PC-3 (cell line): ENCODE measurements at regions of chr2 and their contacts with region 1.

Region 1: GRCh38 chr2:118148809-118149208 is 60.5 kb downstream of the INSIG2 start:
- DNase-seq: no peak
- ATAC-seq: no peak
- H3K4me3 ChIP-seq: no peak overlapping the region
- H3K27ac ChIP-seq: no peak overlapping the region
- H3K4me1 ChIP-seq: peaks cover 17% of the 10 kb centered on the region
- H3K27me3 ChIP-seq: no peaks in the 10 kb centered on the region
- CTCF ChIP-seq: no peak; the same call in 1 of the 2 replicates

Region 2: GRCh38 chr2:118021361-118021760 is 127.4 kb before region 1 on chr2:
- CTCF ChIA-PET with region 1: no interaction called
- POLR2A ChIA-PET with region 1: no interaction called
- intact Hi-C with region 1: no loop called
- DNase-seq: no peak
- ATAC-seq: no peak
- H3K4me3 ChIP-seq: no peak overlapping the region
- H3K27ac ChIP-seq: no peak overlapping the region
- H3K4me1 ChIP-seq: no peaks in the 10 kb centered on the region
- H3K27me3 ChIP-seq: no peaks in the 10 kb centered on the region
- CTCF ChIP-seq: no peak

Region 3: DNA sequence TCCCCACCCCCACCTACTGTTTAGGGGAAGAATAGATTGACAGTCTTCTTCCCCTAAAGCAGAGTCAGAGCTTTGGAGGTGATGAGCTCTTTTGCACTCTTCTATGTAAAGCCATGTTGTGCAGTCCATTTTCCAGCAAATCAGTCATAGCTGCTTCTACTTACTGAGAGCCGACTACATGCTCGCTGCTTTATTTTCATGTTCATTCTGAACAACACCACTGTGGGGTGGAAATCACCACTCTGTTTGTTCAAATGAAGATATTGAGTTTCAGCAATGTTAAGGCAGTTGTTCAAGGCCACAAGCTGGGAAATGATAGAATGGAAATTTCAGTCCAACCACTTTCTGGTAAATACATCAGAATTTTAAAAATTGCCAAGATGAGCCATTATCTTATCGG is 27.8 kb after region 1 on chr2:
- CTCF ChIA-PET with region 1: no interaction called
- POLR2A ChIA-PET with region 1: interaction called, 14 read pairs
- intact Hi-C with region 1: no loop called
- DNase-seq: no peak
- ATAC-seq: no peak
- H3K4me3 ChIP-seq: no peak overlapping the region
- H3K27ac ChIP-seq: no peak overlapping the region
- H3K4me1 ChIP-seq: no peaks in the 10 kb centered on the region
- H3K27me3 ChIP-seq: no peaks in the 10 kb centered on the region
- CTCF ChIP-seq: no peak